ENCODE measurements at regions of chr1 and their contacts with region 1.

Region 1: GRCh38 chr1:23825076-23825761 is at the start of gene HMGCL:
- DNase-seq: peak; percentile 81 to 92 (median 85)
- H3K4me3 ChIP-seq: peak within 1 kb of the TSS; percentile 95
- H3K4me3 Mint-ChIP-seq: peak within 1 kb of the TSS; percentile 89 to 97 (median 93)
- H3K27ac ChIP-seq: peak within 1 kb of the TSS; percentile 96
- H3K27ac Mint-ChIP-seq: peak within 1 kb of the TSS; percentile 93 to 98 (median 96)
- H3K4me1 ChIP-seq: peaks cover 12% of the 10 kb centered on the region
- H3K4me1 Mint-ChIP-seq: peaks cover 23 to 24% (median 24%) of the 10 kb centered on the region in 3 donors
- H3K27me3 ChIP-seq: no peaks in the 10 kb centered on the region
- H3K27me3 Mint-ChIP-seq: no peaks in the 10 kb centered on the region
- total RNA-seq, gene HMGCL: 24.7 to 25.3 TPM

Region 2: GRCh38 chr1:23772049-23772853 is 53.0 kb before region 1 on chr1:
- CTCF ChIA-PET with region 1: interaction called, 3 read pairs
- POLR2A ChIA-PET with region 1: interaction called, 12 read pairs
- DNase-seq: peak; percentile 71 to 87 (median 75)
- H3K4me3 ChIP-seq: no peak overlapping the region
- H3K4me3 Mint-ChIP-seq: peak overlapping the region in 2 of 7 donors; percentile 43 to 47
- H3K27ac ChIP-seq: no peak overlapping the region
- H3K27ac Mint-ChIP-seq: peak overlapping the region in 4 of 8 donors; percentile 9 to 47 (median 32)
- H3K4me1 ChIP-seq: peaks cover 8% of the 10 kb centered on the region
- H3K4me1 Mint-ChIP-seq: peaks cover 16 to 25% (median 24%) of the 10 kb centered on the region in 3 donors
- H3K27me3 ChIP-seq: no peaks in the 10 kb centered on the region
- H3K27me3 Mint-ChIP-seq: no peaks in the 10 kb centered on the region

Region 3: GRCh38 chr1:23800400-23801337 is 24.6 kb before region 1 on chr1 and contains the start of gene GALE:
- CTCF ChIA-PET with region 1: interaction called, 4 read pairs
- POLR2A ChIA-PET with region 1: interaction called, 20 read pairs
- DNase-seq: peak; percentile 92 to 98 (median 95)
- H3K4me3 ChIP-seq: peak within 1 kb of the TSS; percentile 70
- H3K4me3 Mint-ChIP-seq: peak within 1 kb of the TSS; percentile 85 to 97 (median 91)
- H3K27ac ChIP-seq: peak within 1 kb of the TSS; percentile 85
- H3K27ac Mint-ChIP-seq: peak within 1 kb of the TSS; percentile 84 to 96 (median 91)
- H3K4me1 ChIP-seq: peaks cover 20% of the 10 kb centered on the region
- H3K4me1 Mint-ChIP-seq: peaks cover 14 to 24% (median 19%) of the 10 kb centered on the region in 3 donors
- H3K27me3 ChIP-seq: no peaks in the 10 kb centered on the region
- H3K27me3 Mint-ChIP-seq: no peaks in the 10 kb centered on the region
- total RNA-seq, gene GALE: 50.5 to 55.3 TPM

Region 4: GRCh38 chr1:23809751-23810171 is 15.5 kb before region 1 on chr1:
- CTCF ChIA-PET with region 1: interaction called, 78 read pairs
- POLR2A ChIA-PET with region 1: interaction called, 13 read pairs
- DNase-seq: peak; percentile 71 to 88 (median 77)
- H3K4me3 ChIP-seq: no peak overlapping the region
- H3K4me3 Mint-ChIP-seq: no peak overlapping the region
- H3K27ac ChIP-seq: no peak overlapping the region
- H3K27ac Mint-ChIP-seq: peak overlapping the region in 5 of 8 donors; percentile 23 to 81 (median 77)
- H3K4me1 ChIP-seq: peaks cover 18% of the 10 kb centered on the region
- H3K4me1 Mint-ChIP-seq: peaks cover 10 to 15% (median 14%) of the 10 kb centered on the region in 3 donors
- H3K27me3 ChIP-seq: no peaks in the 10 kb centered on the region
- H3K27me3 Mint-ChIP-seq: no peaks in the 10 kb centered on the region

Region 5: GRCh38 chr1:23862640-23863039 is 37.4 kb after region 1 on chr1:
- CTCF ChIA-PET with region 1: no interaction called
- POLR2A ChIA-PET with region 1: no interaction called
- DNase-seq: no peak
- H3K4me3 ChIP-seq: no peak overlapping the region
- H3K4me3 Mint-ChIP-seq: no peak overlapping the region
- H3K27ac ChIP-seq: no peak overlapping the region
- H3K27ac Mint-ChIP-seq: no peak overlapping the region
- H3K4me1 ChIP-seq: peaks cover 15% of the 10 kb centered on the region
- H3K4me1 Mint-ChIP-seq: peaks cover 8 to 22% (median 13%) of the 10 kb centered on the region in 3 donors
- H3K27me3 ChIP-seq: no peaks in the 10 kb centered on the region
- H3K27me3 Mint-ChIP-seq: no peaks in the 10 kb centered on the region

Region 6: GRCh38 chr1:23875382-23875781 is 50.2 kb after region 1 on chr1:
- CTCF ChIA-PET with region 1: no interaction called
- POLR2A ChIA-PET with region 1: no interaction called
- DNase-seq: no peak
- H3K4me3 ChIP-seq: no peak overlapping the region
- H3K4me3 Mint-ChIP-seq: no peak overlapping the region
- H3K27ac ChIP-seq: no peak overlapping the region
- H3K27ac Mint-ChIP-seq: no peak overlapping the region
- H3K4me1 ChIP-seq: no peaks in the 10 kb centered on the region
- H3K4me1 Mint-ChIP-seq: no peaks in the 10 kb centered on the region
- H3K27me3 ChIP-seq: no peaks in the 10 kb centered on the region
- H3K27me3 Mint-ChIP-seq: peaks cover 1 to 7% of the 10 kb centered on the region in 2 donors

Region 7: DNA sequence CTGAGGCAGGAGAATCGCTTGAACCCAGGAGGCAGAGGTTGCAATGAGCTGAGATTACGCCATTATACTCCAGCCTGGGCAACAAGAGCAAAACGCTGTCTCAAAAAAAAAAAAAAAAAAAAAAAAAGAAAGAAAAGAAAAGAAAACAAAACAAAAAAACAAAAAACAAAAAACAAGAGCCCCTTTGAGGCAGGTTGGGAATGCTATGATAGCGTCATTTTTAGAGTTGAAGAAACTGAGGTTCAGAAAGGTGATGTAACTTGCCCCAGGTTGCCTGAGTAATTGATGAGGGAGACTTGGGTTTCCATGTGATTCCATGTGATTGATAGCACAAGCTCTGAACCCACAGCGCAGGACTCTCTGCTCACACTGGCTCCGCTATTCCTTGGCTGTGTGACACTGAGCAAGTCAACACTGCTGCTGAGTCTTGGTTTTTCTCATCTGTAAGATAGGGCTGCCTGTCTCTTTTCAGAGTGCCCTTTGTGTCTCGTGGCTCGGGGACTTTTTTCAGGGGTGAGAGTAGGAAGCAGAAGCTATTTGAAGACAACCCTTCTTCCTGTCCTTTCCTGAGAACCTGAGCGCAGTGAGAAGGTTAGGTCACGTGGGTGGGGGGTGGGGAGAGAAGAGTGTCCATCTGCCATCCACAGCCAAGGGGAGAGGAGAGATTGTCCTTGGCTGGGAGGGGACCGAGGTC is 85.5 kb after region 1 on chr1:
- CTCF ChIA-PET with region 1: interaction called, 3 read pairs
- POLR2A ChIA-PET with region 1: interaction called, 12 read pairs
- DNase-seq: peak in 1 of 5 donors; percentile 10
- H3K4me3 ChIP-seq: no peak overlapping the region
- H3K4me3 Mint-ChIP-seq: peak overlapping the region; percentile 70 to 92 (median 88)
- H3K27ac ChIP-seq: no peak overlapping the region
- H3K27ac Mint-ChIP-seq: peak overlapping the region; percentile 69 to 97 (median 92)
- H3K4me1 ChIP-seq: peaks cover 62% of the 10 kb centered on the region
- H3K4me1 Mint-ChIP-seq: peaks cover 62 to 74% (median 64%) of the 10 kb centered on the region in 3 donors
- H3K27me3 ChIP-seq: no peaks in the 10 kb centered on the region
- H3K27me3 Mint-ChIP-seq: peaks cover 9 to 14% of the 10 kb centered on the region in 2 donors

Region 8: DNA sequence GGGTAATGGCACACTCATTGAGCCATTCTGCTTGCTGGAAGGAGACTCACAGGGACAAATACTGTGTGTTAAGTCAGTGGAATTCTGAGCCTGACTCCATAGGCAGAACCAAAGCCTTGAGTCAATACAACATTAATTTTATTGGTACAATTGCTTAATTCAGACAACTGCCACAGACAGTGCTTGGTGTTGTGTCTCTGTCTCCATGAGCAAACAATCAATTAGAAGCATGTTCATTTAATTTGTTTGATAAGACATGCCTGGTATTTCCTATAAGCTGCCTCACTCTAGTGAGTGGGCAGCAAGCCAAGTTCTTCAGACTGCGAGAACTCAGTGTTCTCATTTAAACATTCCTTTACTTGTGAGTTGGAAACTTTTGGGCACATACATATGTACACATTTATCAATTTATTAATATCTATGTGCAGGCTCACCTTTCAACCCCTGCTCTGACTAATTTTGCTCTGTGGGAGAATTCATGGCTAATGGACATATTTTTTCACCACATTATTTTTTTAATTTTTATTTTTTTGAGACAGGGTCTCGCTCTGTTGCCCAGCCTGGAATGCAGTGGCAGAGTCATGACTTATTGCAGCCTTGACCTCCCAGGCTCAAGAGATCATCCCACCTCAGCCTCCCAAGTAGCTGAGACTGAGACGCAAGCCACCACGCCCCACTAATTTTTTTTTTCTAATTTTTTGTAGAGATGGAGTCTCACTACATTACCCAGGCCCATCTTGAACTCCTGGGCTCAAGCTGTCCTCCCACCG is 159.4 kb after region 1 on chr1:
- CTCF ChIA-PET with region 1: no interaction called
- POLR2A ChIA-PET with region 1: no interaction called
- DNase-seq: no peak
- H3K4me3 ChIP-seq: no peak overlapping the region
- H3K4me3 Mint-ChIP-seq: peak overlapping the region in 1 of 7 donors; percentile 35
- H3K27ac ChIP-seq: no peak overlapping the region
- H3K27ac Mint-ChIP-seq: peak overlapping the region in 1 of 8 donors; percentile 62
- H3K4me1 ChIP-seq: peaks cover 7% of the 10 kb centered on the region
- H3K4me1 Mint-ChIP-seq: peaks cover 10 to 13% (median 10%) of the 10 kb centered on the region in 3 donors
- H3K27me3 ChIP-seq: no peaks in the 10 kb centered on the region
- H3K27me3 Mint-ChIP-seq: no peaks in the 10 kb centered on the region

Region 9: GRCh38 chr1:24070821-24071393 is 245.7 kb after region 1 on chr1:
- CTCF ChIA-PET with region 1: no interaction called
- POLR2A ChIA-PET with region 1: no interaction called
- DNase-seq: peak; percentile 44 to 71 (median 53)
- H3K4me3 ChIP-seq: no peak overlapping the region
- H3K4me3 Mint-ChIP-seq: no peak overlapping the region
- H3K27ac ChIP-seq: no peak overlapping the region
- H3K27ac Mint-ChIP-seq: no peak overlapping the region
- H3K4me1 ChIP-seq: no peaks in the 10 kb centered on the region
- H3K4me1 Mint-ChIP-seq: peaks cover 0 to 4% (median 3%) of the 10 kb centered on the region in 3 donors
- H3K27me3 ChIP-seq: no peaks in the 10 kb centered on the region
- H3K27me3 Mint-ChIP-seq: peaks cover 6 to 16% of the 10 kb centered on the region in 2 donors

Measured in CD8-positive, alpha-beta memory T cell (primary cell).